Activated T-helper 1 cell treated with anti-CD3 and anti-CD28 coated beads, Interleukin-12 subunit alpha, Interleukin-12 subunit beta, Interleukin-2, Interleukin-4 antibody, amounts not matched to agents 30 ng/mL and 10 ng/mL and 1 ng/mL, durations not matched to agents 14 hours and 24 hours and 36 hours (primary cell): ENCODE measurements at regions of chr1 and their contacts with region 1.

Region 1: GRCh38 chr1:29849038-29849750 is 612.9 kb downstream of the PTPRU start:
- DNase-seq: peak; percentile 36
- H3K4me3 Mint-ChIP-seq: no peak overlapping the region
- H3K27ac Mint-ChIP-seq: no peak overlapping the region
- H3K4me1 Mint-ChIP-seq: peaks cover 7% of the 10 kb centered on the region
- H3K27me3 Mint-ChIP-seq: no peaks in the 10 kb centered on the region

Region 2: GRCh38 chr1:29379443-29380073 is 469.6 kb before region 1 on chr1:
- intact Hi-C with region 1: loop called (anchors 1 kb)
- DNase-seq: peak; percentile 3
- H3K4me3 Mint-ChIP-seq: no peak overlapping the region
- H3K27ac Mint-ChIP-seq: no peak overlapping the region
- H3K4me1 Mint-ChIP-seq: no peaks in the 10 kb centered on the region
- H3K27me3 Mint-ChIP-seq: peaks cover 14% of the 10 kb centered on the region

Region 3: DNA sequence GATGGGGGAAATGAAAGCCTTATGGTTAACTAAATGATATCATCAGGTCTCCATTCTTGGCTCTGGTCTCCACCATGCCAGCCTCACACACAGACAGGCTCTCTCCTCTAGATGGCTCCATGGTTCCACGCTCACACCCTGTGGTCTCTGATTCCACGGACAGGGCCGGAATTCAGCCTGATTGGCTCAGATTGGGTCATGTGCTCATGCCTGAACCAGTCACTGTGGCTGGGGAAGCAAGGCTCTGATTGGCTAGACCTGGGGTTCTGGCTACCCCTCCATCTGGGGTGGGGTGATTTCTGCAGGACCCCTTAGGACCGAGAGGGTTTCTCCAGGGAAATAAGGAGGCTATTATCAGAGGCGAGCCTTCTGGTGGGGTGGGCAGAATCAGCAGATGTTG is 335.8 kb before region 1 on chr1:
- intact Hi-C with region 1: loop called (anchors 5 kb)
- DNase-seq: no peak
- H3K4me3 Mint-ChIP-seq: no peak overlapping the region
- H3K27ac Mint-ChIP-seq: no peak overlapping the region
- H3K4me1 Mint-ChIP-seq: no peaks in the 10 kb centered on the region
- H3K27me3 Mint-ChIP-seq: peaks cover 19% of the 10 kb centered on the region

Region 4: GRCh38 chr1:29682919-29683295 is 166.3 kb before region 1 on chr1:
- intact Hi-C with region 1: no loop called
- DNase-seq: no peak
- H3K4me3 Mint-ChIP-seq: no peak overlapping the region
- H3K27ac Mint-ChIP-seq: no peak overlapping the region
- H3K4me1 Mint-ChIP-seq: peaks cover 39% of the 10 kb centered on the region
- H3K27me3 Mint-ChIP-seq: peaks cover 2% of the 10 kb centered on the region

Region 5: DNA sequence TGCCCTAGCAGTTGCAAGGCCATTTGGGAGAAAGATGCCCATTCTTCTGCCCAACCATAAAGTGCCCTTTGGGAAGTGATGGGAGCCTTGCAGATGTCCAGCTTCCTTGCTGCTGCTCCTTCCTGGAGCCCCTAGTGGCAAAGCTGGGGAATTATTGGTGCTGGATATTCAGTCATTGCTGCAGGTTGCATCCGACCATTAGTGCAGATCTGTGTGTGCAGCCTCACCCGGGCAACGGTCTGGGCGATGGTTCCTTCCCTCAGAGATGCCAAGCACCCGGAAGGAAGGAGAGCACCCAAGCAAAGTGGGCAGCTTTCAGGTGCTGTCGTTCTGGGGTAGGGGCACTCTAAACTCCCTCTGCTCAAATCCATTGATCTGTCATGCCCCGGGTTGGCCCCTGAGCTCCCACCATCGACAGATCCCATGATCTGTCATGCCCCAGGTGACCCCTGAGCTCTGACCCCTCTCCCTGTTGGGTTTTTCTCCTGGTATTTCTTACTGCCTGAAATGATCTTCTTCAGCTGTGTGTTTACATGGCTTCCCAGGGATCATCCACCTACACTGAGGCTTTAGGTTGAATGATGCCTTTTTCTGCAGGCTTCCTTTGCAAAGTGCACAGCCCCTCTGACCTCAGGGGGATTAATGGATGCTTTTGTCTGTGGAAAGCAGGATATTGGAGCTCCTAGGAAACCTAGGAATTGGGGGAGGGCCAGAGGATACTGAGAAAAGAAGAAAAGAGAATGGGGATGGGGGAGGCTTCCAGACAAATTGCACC is 145.4 kb before region 1 on chr1:
- intact Hi-C with region 1: loop called (anchors 1 kb)
- DNase-seq: no peak
- H3K4me3 Mint-ChIP-seq: no peak overlapping the region
- H3K27ac Mint-ChIP-seq: no peak overlapping the region
- H3K4me1 Mint-ChIP-seq: peaks cover 11% of the 10 kb centered on the region
- H3K27me3 Mint-ChIP-seq: peaks cover 20% of the 10 kb centered on the region

Region 6: DNA sequence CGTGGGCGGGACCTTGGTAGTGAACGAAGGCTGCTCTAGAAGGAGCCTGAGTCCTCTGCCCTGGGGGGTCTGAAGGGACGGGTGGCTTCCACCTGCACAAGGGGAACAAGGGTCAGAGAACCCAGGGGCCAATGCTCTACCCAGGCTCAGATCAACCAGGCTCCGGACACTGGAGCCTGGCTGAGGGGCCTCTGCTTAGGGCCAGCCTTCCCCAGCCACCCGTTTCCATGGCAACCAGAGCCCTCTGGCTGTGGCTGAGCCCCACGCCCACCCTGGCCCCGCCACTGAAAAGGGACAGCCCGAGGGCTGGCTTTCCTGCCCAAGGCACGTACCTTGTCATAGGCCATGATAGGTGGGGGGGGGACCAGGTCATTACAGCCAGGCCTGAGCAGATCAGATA is 111.7 kb after region 1 on chr1:
- intact Hi-C with region 1: no loop called
- DNase-seq: no peak
- H3K4me3 Mint-ChIP-seq: no peak overlapping the region
- H3K27ac Mint-ChIP-seq: no peak overlapping the region
- H3K4me1 Mint-ChIP-seq: no peaks in the 10 kb centered on the region
- H3K27me3 Mint-ChIP-seq: no peaks in the 10 kb centered on the region

Region 7: GRCh38 chr1:30043731-30044408 is 194.7 kb after region 1 on chr1:
- intact Hi-C with region 1: no loop called
- DNase-seq: no peak
- H3K4me3 Mint-ChIP-seq: no peak overlapping the region
- H3K27ac Mint-ChIP-seq: no peak overlapping the region
- H3K4me1 Mint-ChIP-seq: no peaks in the 10 kb centered on the region
- H3K27me3 Mint-ChIP-seq: no peaks in the 10 kb centered on the region